Sigmoid colon (tissue), 7 donors: ENCODE measurements at regions of chr5 and their contacts with region 1.

Region 1: DNA sequence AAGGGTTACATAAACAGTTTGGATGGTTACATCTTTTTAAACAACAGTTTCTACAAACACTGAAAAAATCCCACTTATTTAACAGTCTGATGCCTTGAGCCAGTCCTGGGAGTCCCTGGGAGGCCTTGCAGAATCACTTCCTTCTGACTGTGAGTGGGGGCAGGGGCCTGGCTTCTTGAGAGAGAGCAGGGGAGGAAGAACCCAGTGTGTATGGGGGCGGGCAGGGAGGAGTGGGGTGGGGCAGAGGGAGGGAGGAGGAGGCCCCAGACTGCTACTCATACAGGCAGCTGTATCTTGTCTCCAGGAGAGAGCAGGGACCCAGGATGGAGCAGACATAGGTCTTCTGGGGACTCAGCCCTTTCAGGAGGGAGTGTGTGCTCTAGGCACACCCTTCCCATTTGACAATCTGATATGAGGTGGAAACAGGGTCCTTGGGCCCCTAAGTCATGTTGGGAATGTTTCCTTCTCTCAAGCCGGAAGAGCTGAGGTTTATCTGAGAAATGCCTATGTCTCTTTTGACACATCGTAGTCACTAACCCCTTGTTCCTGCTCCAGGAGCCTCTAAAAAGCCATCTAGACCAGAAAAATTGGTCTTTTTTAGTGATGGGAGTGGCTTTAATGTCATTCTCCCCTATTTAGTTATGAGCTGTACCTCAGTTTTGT is 52.8 kb downstream of the IRF1 start:
- DNase-seq: peak; percentile 95
- H3K4me3 ChIP-seq: no peak overlapping the region
- H3K27ac ChIP-seq: peak overlapping the region; percentile 77 to 87 (median 80)
- H3K4me1 ChIP-seq: peaks cover 0 to 98% (median 86%) of the 10 kb centered on the region in 4 donors
- H3K27me3 ChIP-seq: no peaks in the 10 kb centered on the region
- CTCF ChIP-seq: no peak
- EP300 ChIP-seq: no peak
- POLR2A ChIP-seq: no peak

Region 2: GRCh38 chr5:132419502-132420468 is 17.9 kb before region 1 on chr5:
- intact Hi-C with region 1: loop called (anchors 2 kb)
- DNase-seq: peak; percentile 87
- H3K4me3 ChIP-seq: no peak overlapping the region
- H3K27ac ChIP-seq: peak overlapping the region; percentile 67 to 98 (median 84)
- H3K4me1 ChIP-seq: peaks cover 0 to 100% (median 92%) of the 10 kb centered on the region in 4 donors
- H3K27me3 ChIP-seq: no peaks in the 10 kb centered on the region
- CTCF ChIP-seq: peak; percentile 83 to 91 (median 90)
- EP300 ChIP-seq: no peak
- POLR2A ChIP-seq: no peak

Region 3: GRCh38 chr5:132473019-132473531 is 35.3 kb after region 1 on chr5:
- intact Hi-C with region 1: loop called (anchors 5 kb)
- DNase-seq: peak; percentile 65
- H3K4me3 ChIP-seq: no peak overlapping the region
- H3K27ac ChIP-seq: no peak overlapping the region
- H3K4me1 ChIP-seq: peaks cover 0 to 39% (median 26%) of the 10 kb centered on the region in 4 donors
- H3K27me3 ChIP-seq: no peaks in the 10 kb centered on the region
- CTCF ChIP-seq: no peak
- EP300 ChIP-seq: no peak
- POLR2A ChIP-seq: no peak